ENCODE measurements at regions of chr17 and their contacts with region 1.

Region 1: GRCh38 chr17:5237541-5238016 is 2.9 kb upstream of the SCIMP start:
- DNase-seq: peak; percentile 26
- H3K4me3 ChIP-seq: no peak overlapping the region
- H3K27ac ChIP-seq: no peak overlapping the region
- H3K4me1 ChIP-seq: peaks cover 10% of the 10 kb centered on the region
- H3K27me3 ChIP-seq: no peaks in the 10 kb centered on the region
- CTCF ChIP-seq: peak; percentile 60

Region 2: DNA sequence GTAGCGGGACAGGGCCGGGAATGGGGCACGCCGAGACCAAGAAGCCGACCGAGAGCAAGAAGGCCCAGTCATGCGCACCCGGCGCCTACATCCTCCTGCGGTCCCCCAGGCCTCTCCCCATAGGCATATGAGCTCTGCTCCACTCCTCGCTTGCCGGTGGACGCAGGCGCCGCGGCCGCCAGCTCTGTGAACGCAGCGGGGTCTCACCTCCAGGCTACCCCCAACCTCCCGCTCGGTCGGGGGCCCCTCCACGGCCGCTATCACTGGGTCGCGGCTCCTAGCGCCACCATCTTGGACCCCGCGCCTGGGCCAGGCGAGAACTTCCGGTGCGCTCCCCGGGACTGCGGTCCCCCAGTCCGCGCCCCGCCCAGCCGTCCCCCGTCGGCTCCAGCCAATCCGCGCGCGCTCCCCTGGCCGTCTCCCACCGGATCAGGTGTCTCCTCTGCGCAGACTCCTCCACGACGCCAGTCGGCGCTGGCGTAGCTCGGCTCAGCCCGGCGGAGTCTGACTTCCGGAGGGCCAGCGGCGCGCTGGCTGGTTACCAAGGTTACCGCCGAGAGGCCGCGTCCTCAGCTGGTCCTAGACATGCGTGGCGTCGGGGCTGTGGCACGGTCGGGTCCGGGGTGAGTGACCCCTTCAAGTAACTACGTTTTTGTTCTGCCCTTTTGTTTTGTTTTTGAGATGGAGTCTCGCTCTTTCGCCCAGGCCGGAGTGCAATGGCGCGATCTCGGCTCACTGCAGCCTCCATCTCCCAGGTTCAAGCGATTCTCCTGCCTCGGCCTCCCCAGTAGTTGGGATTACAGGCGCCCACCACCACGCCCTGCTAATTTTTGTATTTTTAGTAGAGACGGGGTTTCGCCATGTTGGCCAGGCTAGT is 45.8 kb before region 1 on chr17 and contains the start of gene ZNF594:
- intact Hi-C with region 1: loop called (anchors 2 kb)
- DNase-seq: peak; percentile 97
- H3K4me3 ChIP-seq: peak within 1 kb of the TSS; percentile 99
- H3K27ac ChIP-seq: peak within 1 kb of the TSS; percentile 89
- H3K4me1 ChIP-seq: peaks cover 32% of the 10 kb centered on the region
- H3K27me3 ChIP-seq: no peaks in the 10 kb centered on the region
- CTCF ChIP-seq: peak; percentile 81
- total RNA-seq, gene ZNF594: 7.7 TPM

Measured in left ventricle myocardium inferior (tissue), 1 donor.